B cell (primary cell): ENCODE measurements at regions of chr17 and their contacts with region 1.

Region 1: GRCh38 chr17:42577532-42578281 is at the start of gene PSMC3IP:
- DNase-seq: peak; percentile 94
- ATAC-seq: peak; percentile 93
- H3K4me3 ChIP-seq: peak within 1 kb of the TSS; percentile 56 to 82 (median 74)
- H3K4me3 Mint-ChIP-seq: peak within 1 kb of the TSS; percentile 99
- H3K27ac ChIP-seq: peak within 1 kb of the TSS; percentile 45 to 72
- H3K27ac Mint-ChIP-seq: peak within 1 kb of the TSS; percentile 99
- H3K4me1 ChIP-seq: peaks cover 12 to 30% of the 10 kb centered on the region in 2 donors
- H3K4me1 Mint-ChIP-seq: peaks cover 42% of the 10 kb centered on the region
- H3K27me3 ChIP-seq: no peaks in the 10 kb centered on the region
- H3K27me3 Mint-ChIP-seq: no peaks in the 10 kb centered on the region
- CTCF ChIP-seq: no peak
- total RNA-seq, gene PSMC3IP: 7.9 and 10.4 TPM in 2 replicates

Region 2: GRCh38 chr17:42536048-42536371 is 41.7 kb before region 1 on chr17 and contains the start of gene NAGLU:
- CTCF ChIA-PET with region 1: interaction called, 3 read pairs
- POLR2A ChIA-PET with region 1: interaction called, 9 read pairs
- intact Hi-C with region 1: loop called (anchors 1 kb)
- DNase-seq: peak; percentile 95
- ATAC-seq: peak; percentile 90
- H3K4me3 ChIP-seq: peak within 1 kb of the TSS; percentile 51 to 82 (median 70)
- H3K4me3 Mint-ChIP-seq: peak within 1 kb of the TSS; percentile 93
- H3K27ac ChIP-seq: peak within 1 kb of the TSS; percentile 86 to 94
- H3K27ac Mint-ChIP-seq: peak within 1 kb of the TSS; percentile 87
- H3K4me1 ChIP-seq: peaks cover 24 to 31% of the 10 kb centered on the region in 2 donors
- H3K4me1 Mint-ChIP-seq: peaks cover 41% of the 10 kb centered on the region
- H3K27me3 ChIP-seq: no peaks in the 10 kb centered on the region
- H3K27me3 Mint-ChIP-seq: no peaks in the 10 kb centered on the region
- CTCF ChIP-seq: no peak
- total RNA-seq, gene NAGLU: 44.8 and 47.1 TPM in 2 replicates

Region 3: GRCh38 chr17:42566883-42567573 is 10.7 kb before region 1 on chr17 and contains the start of gene MLX:
- CTCF ChIA-PET with region 1: interaction called, 51 read pairs
- POLR2A ChIA-PET with region 1: interaction called, 19 read pairs
- intact Hi-C with region 1: loop called (anchors 1 kb)
- DNase-seq: peak; percentile 94
- ATAC-seq: peak; percentile 80
- H3K4me3 ChIP-seq: peak within 1 kb of the TSS; percentile 66 to 88 (median 74)
- H3K4me3 Mint-ChIP-seq: peak within 1 kb of the TSS; percentile 99
- H3K27ac ChIP-seq: peak within 1 kb of the TSS; percentile 76 to 78
- H3K27ac Mint-ChIP-seq: peak within 1 kb of the TSS; percentile 98
- H3K4me1 ChIP-seq: peaks cover 26 to 42% of the 10 kb centered on the region in 2 donors
- H3K4me1 Mint-ChIP-seq: peaks cover 35% of the 10 kb centered on the region
- H3K27me3 ChIP-seq: no peaks in the 10 kb centered on the region
- H3K27me3 Mint-ChIP-seq: no peaks in the 10 kb centered on the region
- CTCF ChIP-seq: no peak
- total RNA-seq, gene MLX: 66.6 and 71.5 TPM in 2 replicates

Region 4: GRCh38 chr17:42670199-42670924 is 92.7 kb after region 1 on chr17:
- CTCF ChIA-PET with region 1: interaction called, 12 read pairs
- POLR2A ChIA-PET with region 1: no interaction called
- intact Hi-C with region 1: no loop called
- DNase-seq: peak; percentile 84
- ATAC-seq: peak; percentile 81
- H3K4me3 ChIP-seq: peak overlapping the region; percentile 35 to 60 (median 41)
- H3K4me3 Mint-ChIP-seq: peak overlapping the region; percentile 87
- H3K27ac ChIP-seq: no peak overlapping the region
- H3K27ac Mint-ChIP-seq: peak overlapping the region; percentile 67
- H3K4me1 ChIP-seq: peaks cover 34 to 41% of the 10 kb centered on the region in 2 donors
- H3K4me1 Mint-ChIP-seq: peaks cover 33% of the 10 kb centered on the region
- H3K27me3 ChIP-seq: peaks cover 0 to 56% (median 22%) of the 10 kb centered on the region in 4 experiments
- H3K27me3 Mint-ChIP-seq: peaks cover 16% of the 10 kb centered on the region
- CTCF ChIP-seq: peak; percentile 14

Region 5: GRCh38 chr17:42760652-42761581 is 183.2 kb after region 1 on chr17 and contains the start of gene RAMP2:
- CTCF ChIA-PET with region 1: interaction called, 60 read pairs
- POLR2A ChIA-PET with region 1: interaction called, 7 read pairs
- intact Hi-C with region 1: no loop called
- DNase-seq: peak; percentile 45
- ATAC-seq: peak; percentile 32
- H3K4me3 ChIP-seq: peak within 1 kb of the TSS in 4 of 5 experiments; percentile 13 to 54 (median 39)
- H3K4me3 Mint-ChIP-seq: peak within 1 kb of the TSS; percentile 85
- H3K27ac ChIP-seq: no peak within 1 kb of the TSS
- H3K27ac Mint-ChIP-seq: peak within 1 kb of the TSS; percentile 37
- H3K4me1 ChIP-seq: peaks cover 19 to 23% of the 10 kb centered on the region in 2 donors
- H3K4me1 Mint-ChIP-seq: peaks cover 23% of the 10 kb centered on the region
- H3K27me3 ChIP-seq: peaks cover 0 to 48% (median 18%) of the 10 kb centered on the region in 4 experiments
- H3K27me3 Mint-ChIP-seq: peaks cover 50% of the 10 kb centered on the region
- CTCF ChIP-seq: no peak
- total RNA-seq, gene RAMP2: not detected in 2 replicates

Region 6: DNA sequence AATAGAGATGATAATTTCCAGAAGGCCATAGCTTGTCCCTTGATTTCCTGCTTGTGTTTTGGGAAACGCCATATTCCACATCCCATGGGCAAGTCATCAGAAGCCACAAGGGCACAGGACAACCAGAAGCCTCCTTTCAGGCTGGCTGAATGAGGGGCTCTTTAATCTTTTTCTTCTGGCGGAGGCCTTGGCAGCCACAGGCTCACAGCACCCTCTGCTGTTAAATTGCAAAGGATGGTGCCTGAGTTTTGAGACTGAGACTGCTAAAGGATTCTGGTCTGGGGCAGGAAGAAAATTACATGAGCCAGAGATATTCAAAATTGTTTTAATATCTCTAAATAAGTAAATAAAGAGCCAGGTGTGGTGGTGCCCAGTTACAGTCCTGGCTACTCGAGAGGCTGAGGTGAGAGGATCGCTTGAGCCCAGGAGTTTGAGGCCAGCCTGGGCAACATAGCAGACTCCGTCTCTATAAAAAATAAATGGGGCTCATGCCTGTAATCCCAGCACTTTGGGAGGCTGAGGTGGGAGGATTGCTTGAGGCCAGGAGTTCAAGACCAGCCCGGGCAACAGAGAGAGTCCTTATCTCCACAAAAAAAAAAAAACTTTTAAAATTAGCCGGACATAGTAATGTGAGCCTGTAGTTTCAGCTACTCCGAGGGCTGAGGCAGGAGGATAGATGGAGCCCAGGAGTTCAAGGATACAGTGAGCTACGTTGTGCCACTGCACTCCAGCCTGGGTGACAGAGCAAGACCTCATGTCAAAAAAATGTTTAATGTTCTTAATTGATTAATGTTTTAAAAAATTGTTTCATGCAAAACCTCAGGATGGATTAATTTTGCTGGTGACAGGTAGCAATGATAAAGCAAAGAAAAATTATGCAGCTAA is 360.2 kb after region 1 on chr17:
- CTCF ChIA-PET with region 1: interaction called, 3 read pairs
- POLR2A ChIA-PET with region 1: no interaction called
- intact Hi-C with region 1: loop called (anchors 1 kb)
- DNase-seq: peak; percentile 48
- ATAC-seq: peak; percentile 45
- H3K4me3 ChIP-seq: no peak overlapping the region
- H3K4me3 Mint-ChIP-seq: no peak overlapping the region
- H3K27ac ChIP-seq: no peak overlapping the region
- H3K27ac Mint-ChIP-seq: no peak overlapping the region
- H3K4me1 ChIP-seq: no peaks in the 10 kb centered on the region
- H3K4me1 Mint-ChIP-seq: no peaks in the 10 kb centered on the region
- H3K27me3 ChIP-seq: peaks cover 0 to 6% (median 1%) of the 10 kb centered on the region in 4 experiments
- H3K27me3 Mint-ChIP-seq: no peaks in the 10 kb centered on the region
- CTCF ChIP-seq: peak; percentile 54